PC-3 (cell line): ENCODE measurements at regions of chrX and their contacts with region 1.

Region 1: DNA sequence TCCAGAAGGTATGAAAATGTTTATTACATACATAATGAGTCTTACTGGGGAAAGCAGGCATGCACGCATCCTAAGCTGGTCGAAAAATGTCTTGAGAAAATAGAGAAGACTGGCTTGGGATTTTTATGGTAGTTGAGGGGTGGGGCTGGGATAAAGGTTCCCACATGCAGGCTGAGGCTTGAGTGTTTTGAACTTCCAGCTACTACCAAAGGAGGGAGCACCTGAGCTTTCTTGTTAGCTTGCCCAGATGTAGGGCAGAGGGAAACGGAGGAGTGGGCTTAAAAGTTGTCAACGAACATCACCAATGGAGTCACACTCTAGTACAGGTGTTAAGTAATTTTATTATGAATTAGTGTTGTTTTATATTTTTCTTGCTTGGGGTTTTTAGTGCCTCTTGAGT is 39.6 kb upstream of the SRPX start:
- DNase-seq: peak; percentile 64
- ATAC-seq: peak; percentile 64
- H3K4me3 ChIP-seq: no peak overlapping the region
- H3K27ac ChIP-seq: no peak overlapping the region
- H3K4me1 ChIP-seq: no peaks in the 10 kb centered on the region
- H3K27me3 ChIP-seq: no peaks in the 10 kb centered on the region
- CTCF ChIP-seq: peak; percentile 72

Region 2: DNA sequence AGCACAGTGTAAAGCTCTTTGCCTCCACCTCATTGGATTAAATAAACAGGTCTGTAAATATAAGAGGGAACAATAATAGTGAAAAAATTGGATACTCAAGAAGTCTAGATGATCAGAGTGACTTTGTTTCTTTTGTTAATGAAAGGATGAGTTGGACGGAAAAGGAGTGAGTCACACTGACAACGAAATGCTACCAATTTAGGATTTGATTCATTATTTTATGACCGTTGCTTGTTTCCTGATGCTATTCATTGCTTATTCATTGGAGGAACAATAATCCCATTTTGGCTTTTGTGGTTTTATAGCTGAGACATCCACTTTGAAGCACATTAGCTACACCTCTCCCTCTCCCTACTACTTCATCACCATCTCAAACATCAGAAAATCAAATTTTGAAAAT is 338.5 kb before region 1 on chrX:
- CTCF ChIA-PET with region 1: no interaction called
- POLR2A ChIA-PET with region 1: no interaction called
- intact Hi-C with region 1: no loop called
- DNase-seq: peak; percentile 85
- ATAC-seq: peak; percentile 87
- H3K4me3 ChIP-seq: peak overlapping the region; percentile 7; the same call in 1 of the 2 replicates
- H3K27ac ChIP-seq: peak overlapping the region; percentile 89
- H3K4me1 ChIP-seq: peaks cover 24% of the 10 kb centered on the region
- H3K27me3 ChIP-seq: no peaks in the 10 kb centered on the region
- CTCF ChIP-seq: no peak

Region 3: DNA sequence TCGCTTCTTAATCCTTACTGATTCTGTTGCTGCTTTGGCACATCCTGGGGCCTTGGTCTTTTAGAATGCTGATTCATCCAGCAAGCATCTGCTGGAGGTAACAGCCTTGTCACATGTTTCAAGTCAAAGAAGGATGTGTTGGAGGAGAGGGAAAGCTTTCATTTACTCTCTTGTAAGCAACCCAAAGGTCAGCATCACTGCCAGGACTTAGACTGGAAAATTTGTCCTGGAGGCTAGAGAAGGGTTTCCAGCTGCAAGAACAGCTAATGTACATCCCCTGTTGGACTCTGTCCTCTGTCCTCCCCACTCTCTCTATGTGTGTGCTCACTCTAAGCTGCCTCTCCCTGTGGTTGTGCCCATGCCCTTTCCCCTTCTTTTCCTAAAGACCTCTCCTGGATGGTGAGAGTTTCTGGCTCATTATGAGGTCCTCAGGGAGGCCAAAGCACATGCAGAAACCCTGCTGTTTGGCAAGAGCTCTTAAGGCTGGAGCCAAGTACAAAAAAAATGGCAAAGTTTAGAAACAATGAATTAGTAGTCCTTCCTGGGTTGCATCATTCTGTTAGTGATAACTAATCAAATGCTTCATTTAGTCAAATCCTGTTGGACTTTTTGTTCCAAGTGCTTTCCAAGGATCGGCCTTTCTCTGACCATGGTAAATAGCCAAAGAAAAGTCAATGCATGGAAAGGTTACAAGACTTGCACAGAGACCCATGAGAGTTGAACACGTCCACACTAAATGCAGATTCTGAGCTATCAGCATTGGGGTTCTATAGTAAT is 26.2 kb before region 1 on chrX:
- CTCF ChIA-PET with region 1: no interaction called
- POLR2A ChIA-PET with region 1: no interaction called
- intact Hi-C with region 1: loop called (anchors 1 kb)
- DNase-seq: peak; percentile 65
- ATAC-seq: peak; percentile 81
- H3K4me3 ChIP-seq: no peak overlapping the region
- H3K27ac ChIP-seq: 0 out of 2 replicates have a peak overlapping the region, but pooled peaks have one; percentile 7
- H3K4me1 ChIP-seq: peaks cover 11% of the 10 kb centered on the region
- H3K27me3 ChIP-seq: no peaks in the 10 kb centered on the region
- CTCF ChIP-seq: no peak

Region 4: GRCh38 chrX:38282044-38282443 is 21.8 kb after region 1 on chrX:
- CTCF ChIA-PET with region 1: interaction called, 10 read pairs
- POLR2A ChIA-PET with region 1: no interaction called
- intact Hi-C with region 1: no loop called
- DNase-seq: peak; percentile 7
- ATAC-seq: no peak; the same call in 1 of the 2 replicates
- H3K4me3 ChIP-seq: no peak overlapping the region
- H3K27ac ChIP-seq: no peak overlapping the region
- H3K4me1 ChIP-seq: peaks cover 25% of the 10 kb centered on the region
- H3K27me3 ChIP-seq: no peaks in the 10 kb centered on the region
- CTCF ChIP-seq: peak; percentile 45